Right cardiac atrium (tissue), 5 donors: ENCODE measurements at regions of chr9 and their contacts with region 1.

Region 1: GRCh38 chr9:84697509-84698114 is 28.1 kb downstream of the NTRK2 start:
- DNase-seq: peak; percentile 68 to 90 (median 83)
- ATAC-seq: peak; percentile 78 to 80
- H3K4me3 ChIP-seq: no peak overlapping the region
- H3K27ac ChIP-seq: no peak overlapping the region
- H3K4me1 ChIP-seq: no peaks in the 10 kb centered on the region
- H3K27me3 ChIP-seq: no peaks in the 10 kb centered on the region

Region 2: DNA sequence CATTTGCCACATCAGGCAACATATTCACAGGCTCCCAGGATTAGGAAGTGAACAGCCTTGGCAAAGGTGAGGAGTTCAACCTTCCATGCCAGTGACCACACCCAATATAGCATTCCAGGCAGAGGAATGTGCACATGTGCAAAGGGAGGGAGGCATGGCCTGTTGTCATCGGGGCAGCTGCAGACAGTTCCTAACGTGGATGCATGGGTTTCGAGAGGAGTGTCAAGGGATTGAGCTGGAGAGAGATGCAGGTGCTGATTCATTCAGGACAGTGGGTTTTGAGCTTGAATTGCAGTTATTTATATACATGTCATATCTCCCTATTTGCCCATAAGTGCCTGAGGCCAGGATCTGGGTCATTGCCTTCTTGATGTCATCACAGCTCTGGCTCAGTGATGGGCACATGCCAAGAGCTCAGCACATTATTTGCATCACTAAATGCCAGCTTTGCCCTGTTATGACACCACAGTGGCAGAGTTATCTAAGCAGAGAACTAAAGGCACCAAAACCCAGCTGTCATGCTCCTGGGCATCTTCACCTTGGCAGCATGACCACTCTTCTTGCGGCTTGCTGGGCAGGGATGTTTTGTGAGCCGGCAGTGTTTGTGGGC is 249.9 kb after region 1 on chr9:
- intact Hi-C with region 1: loop called in 3 of 4 experiments (anchors 10 kb)
- DNase-seq: peak; percentile 57 to 70 (median 68)
- ATAC-seq: peak; percentile 80 to 82
- H3K4me3 ChIP-seq: no peak overlapping the region
- H3K27ac ChIP-seq: peak overlapping the region; percentile 69
- H3K4me1 ChIP-seq: peaks cover 5% of the 10 kb centered on the region
- H3K27me3 ChIP-seq: no peaks in the 10 kb centered on the region

Region 3: DNA sequence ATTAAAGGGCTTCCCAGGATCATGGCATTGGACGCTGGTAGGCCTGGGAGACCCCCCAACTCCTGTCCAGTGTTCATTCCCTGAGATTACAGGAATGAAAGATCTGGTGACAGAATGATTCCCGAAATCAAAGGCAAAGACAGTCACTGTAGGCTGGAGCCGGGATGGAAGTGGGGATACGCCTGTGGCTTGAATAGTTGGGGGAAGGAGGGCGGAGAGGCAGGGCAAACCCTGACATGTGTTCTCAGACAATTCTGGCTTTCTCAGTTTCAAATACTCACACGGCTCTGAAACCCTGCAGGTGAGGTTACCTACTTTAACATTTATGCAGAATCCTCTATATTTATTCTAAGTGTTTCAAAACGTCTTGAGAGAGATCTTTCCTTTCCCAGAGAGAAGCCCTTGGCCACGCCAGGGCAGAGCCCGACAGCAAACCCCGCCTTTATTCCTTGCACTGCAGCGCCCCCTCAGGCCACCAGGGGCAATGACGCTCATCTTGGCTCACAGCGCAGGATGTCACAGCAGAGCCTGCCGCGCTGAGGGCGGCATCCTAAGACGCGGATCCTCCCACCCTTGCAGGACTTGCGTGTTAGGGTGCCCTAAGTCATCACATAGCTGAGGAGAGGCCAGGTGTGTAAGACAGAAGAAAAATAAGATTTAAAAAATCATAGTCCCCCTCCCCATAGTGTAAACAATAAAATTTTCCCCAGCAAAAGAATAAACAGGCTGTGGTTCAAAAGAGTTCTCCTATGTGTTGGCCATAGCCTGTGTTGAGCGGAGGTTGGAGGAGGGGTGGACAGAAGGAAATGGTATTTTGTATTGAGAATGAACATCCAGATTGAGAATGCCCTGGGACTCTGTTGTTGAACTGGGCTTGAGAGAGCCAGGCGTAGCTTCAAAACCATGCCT is 256.4 kb after region 1 on chr9:
- intact Hi-C with region 1: loop called in 3 of 4 experiments (anchors 10 kb)
- DNase-seq: peak; percentile 80 to 92 (median 91)
- ATAC-seq: peak; percentile 90 to 93
- H3K4me3 ChIP-seq: no peak overlapping the region
- H3K27ac ChIP-seq: no peak overlapping the region
- H3K4me1 ChIP-seq: peaks cover 2% of the 10 kb centered on the region
- H3K27me3 ChIP-seq: no peaks in the 10 kb centered on the region

Region 4: GRCh38 chr9:85142968-85143367 is 445.4 kb after region 1 on chr9:
- intact Hi-C with region 1: loop called in 1 of 4 experiments (anchors 10 kb)
- DNase-seq: no peak
- ATAC-seq: peak in 1 of 2 donors; percentile 26
- H3K4me3 ChIP-seq: no peak overlapping the region
- H3K27ac ChIP-seq: no peak overlapping the region
- H3K4me1 ChIP-seq: no peaks in the 10 kb centered on the region
- H3K27me3 ChIP-seq: no peaks in the 10 kb centered on the region

Region 5: GRCh38 chr9:85700330-85700729 is 1002.7 kb after region 1 on chr9:
- intact Hi-C with region 1: no loop called
- DNase-seq: no peak
- ATAC-seq: no peak
- H3K4me3 ChIP-seq: no peak overlapping the region
- H3K27ac ChIP-seq: no peak overlapping the region
- H3K4me1 ChIP-seq: peaks cover 2% of the 10 kb centered on the region
- H3K27me3 ChIP-seq: no peaks in the 10 kb centered on the region